H1 (cell line): ENCODE measurements at regions of chr2 and their contacts with region 1.

Region 1: DNA sequence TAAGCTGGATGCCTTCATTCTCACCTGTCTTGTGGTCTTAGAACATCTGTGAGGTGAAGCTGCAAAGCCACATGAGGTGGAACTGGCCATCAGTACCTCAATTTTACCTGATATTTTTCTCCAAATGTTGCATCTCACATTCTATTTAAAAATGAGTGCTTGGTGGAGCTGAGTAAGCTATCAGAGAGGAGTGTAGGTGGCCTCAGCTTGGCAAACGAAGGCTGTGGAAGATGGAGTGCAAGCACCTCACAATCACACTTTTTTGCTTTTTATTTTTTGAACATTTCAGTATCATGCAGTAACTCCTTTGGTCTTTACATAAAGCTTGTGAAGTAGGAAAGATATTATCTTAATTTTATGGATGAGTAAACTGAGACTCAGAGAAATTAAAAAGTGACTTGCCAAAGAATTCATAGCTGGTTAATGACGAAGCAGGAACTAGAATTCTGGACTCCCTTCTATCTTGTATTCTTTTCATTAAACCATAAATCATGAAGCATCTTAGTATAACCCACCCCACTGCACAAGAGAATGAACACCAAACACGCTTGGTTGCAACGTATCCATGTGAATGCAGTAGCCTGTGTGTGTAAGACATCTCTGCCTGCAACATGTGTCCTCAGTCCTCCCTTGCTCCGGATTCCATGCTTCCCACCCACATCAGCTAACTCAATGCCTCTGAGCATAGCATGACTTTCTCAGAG is 27.2 kb downstream of the C2orf49 start:
- DNase-seq: no peak
- H3K4me3 ChIP-seq: no peak overlapping the region
- H3K27ac ChIP-seq: no peak overlapping the region
- H3K4me1 ChIP-seq: no peaks in the 10 kb centered on the region
- H3K27me3 ChIP-seq: no peaks in the 10 kb centered on the region
- CTCF ChIP-seq: no peak
- EP300 ChIP-seq: no peak
- POLR2A ChIP-seq: no peak
- RAD21 ChIP-seq: no peak

Region 2: DNA sequence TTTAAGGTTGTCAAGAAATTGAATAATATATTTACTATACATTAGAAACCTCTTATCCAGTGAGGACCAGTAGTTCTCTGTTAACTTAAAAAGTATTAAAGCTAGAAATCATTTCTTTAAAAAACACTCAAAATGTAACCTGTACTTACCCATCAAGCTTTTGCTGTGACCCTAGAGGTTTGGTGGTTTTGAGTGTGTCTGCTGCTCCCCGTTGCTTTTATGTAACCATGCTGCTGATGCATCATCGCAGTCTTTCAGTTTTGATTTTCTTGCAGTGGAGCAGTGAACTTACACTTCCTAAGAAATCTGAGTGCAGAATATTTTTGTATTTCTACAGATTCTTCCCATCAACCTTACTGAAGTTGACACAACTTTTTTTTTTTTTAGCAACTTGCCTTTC is 292.5 kb before region 1 on chr2:
- CTCF ChIA-PET with region 1: no interaction called
- POLR2A ChIA-PET with region 1: no interaction called
- DNase-seq: no peak
- H3K4me3 ChIP-seq: no peak overlapping the region
- H3K27ac ChIP-seq: no peak overlapping the region
- H3K4me1 ChIP-seq: peaks cover 1 to 5% (median 3%) of the 10 kb centered on the region in 4 experiments; a peak in 2 of 7 replicates
- H3K27me3 ChIP-seq: no peaks in the 10 kb centered on the region
- CTCF ChIP-seq: no peak
- EP300 ChIP-seq: no peak
- POLR2A ChIP-seq: no peak
- RAD21 ChIP-seq: no peak

Region 3: DNA sequence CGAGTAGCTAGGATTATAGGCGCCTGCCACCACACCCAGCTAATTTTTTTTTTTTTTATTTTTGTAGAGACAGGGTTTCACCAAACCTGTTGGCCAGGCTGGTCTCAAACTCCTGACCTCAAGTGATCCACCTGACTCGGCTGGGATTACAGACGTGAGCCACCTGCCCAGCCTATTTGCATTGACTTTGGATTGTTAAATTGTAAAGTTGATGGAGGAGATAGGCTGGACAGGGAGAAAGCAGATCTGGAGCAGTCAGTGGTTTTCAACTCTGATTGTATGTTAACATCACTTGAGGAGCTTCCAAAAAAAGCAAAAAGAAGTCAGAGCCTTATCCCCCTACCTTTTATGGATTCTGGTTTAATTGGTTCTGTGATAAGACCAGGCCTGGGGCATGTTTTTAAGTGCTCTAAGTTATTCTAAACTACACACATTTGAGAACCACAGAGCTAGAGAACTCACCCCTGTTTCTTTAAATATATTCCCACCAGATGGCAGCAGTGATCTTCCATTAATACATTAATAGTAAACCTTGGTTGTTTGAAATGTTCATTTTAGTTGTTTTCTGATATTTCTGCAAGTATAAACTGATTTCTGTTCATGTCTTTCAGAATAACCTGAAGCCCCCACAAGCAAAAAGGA is 19.8 kb before region 1 on chr2:
- CTCF ChIA-PET with region 1: interaction called, 20 read pairs
- POLR2A ChIA-PET with region 1: interaction called, 4 read pairs
- DNase-seq: no peak
- H3K4me3 ChIP-seq: no peak overlapping the region
- H3K27ac ChIP-seq: no peak overlapping the region
- H3K4me1 ChIP-seq: no peaks in the 10 kb centered on the region
- H3K27me3 ChIP-seq: no peaks in the 10 kb centered on the region
- CTCF ChIP-seq: no peak
- EP300 ChIP-seq: no peak
- POLR2A ChIP-seq: no peak
- RAD21 ChIP-seq: peak in 1 of 2 experiments; percentile 24; a peak in 2 of 4 replicates